ENCODE measurements at regions of chr2 and their contacts with region 1.

Region 1: GRCh38 chr2:63628403-63628942 is 39.7 kb downstream of the MDH1 start:
- DNase-seq: no peak
- H3K4me3 ChIP-seq: no peak overlapping the region
- H3K27ac ChIP-seq: no peak overlapping the region
- H3K4me1 ChIP-seq: no peaks in the 10 kb centered on the region
- H3K27me3 ChIP-seq: no peaks in the 10 kb centered on the region
- CTCF ChIP-seq: no peak

Region 2: DNA sequence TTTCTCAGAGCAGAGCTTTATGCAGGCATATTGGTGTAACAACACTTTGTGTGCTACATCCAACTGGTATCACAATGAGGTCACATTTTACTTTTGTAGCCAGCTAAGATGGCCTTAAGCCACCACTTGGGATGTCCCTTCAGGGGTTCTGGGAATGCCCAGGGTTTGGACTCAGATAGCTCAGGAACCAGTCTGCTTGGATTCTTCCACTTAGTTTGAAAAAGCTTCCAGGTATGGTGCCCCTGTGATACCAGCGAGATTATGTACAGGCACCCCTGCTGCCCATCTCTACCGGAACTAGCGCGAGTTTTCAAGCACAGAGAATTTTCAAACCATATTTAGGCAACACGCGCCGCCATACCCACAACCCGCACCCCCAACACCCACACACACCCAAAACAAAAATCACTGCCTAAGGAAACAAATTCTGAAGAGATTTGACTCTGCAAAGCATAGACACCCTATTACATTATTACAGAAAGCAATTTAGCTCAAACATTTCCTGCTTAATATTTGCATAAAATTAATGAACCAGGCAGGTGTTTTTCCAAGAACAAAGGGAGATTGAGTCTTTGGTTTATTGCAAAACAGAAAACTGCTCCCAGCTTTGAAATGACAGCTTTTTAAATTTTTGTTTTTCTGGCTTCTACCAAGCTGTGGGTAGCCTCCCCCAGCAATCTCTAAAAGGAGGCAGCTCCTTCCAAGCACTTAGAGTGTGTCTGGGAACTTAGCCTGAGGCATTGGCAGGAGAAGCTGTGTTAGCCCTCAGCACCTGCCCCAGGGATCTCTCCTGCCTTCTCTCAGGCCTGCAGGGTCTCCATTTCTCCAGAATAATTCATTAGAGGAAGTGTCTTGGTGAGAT is 1374.2 kb before region 1 on chr2:
- CTCF ChIA-PET with region 1: no interaction called
- POLR2A ChIA-PET with region 1: no interaction called
- intact Hi-C with region 1: no loop called
- DNase-seq: no peak
- H3K4me3 ChIP-seq: no peak overlapping the region
- H3K27ac ChIP-seq: no peak overlapping the region
- H3K4me1 ChIP-seq: no peaks in the 10 kb centered on the region
- H3K27me3 ChIP-seq: no peaks in the 10 kb centered on the region
- CTCF ChIP-seq: no peak

Region 3: GRCh38 chr2:62874881-62875383 is 753.5 kb before region 1 on chr2:
- CTCF ChIA-PET with region 1: no interaction called
- POLR2A ChIA-PET with region 1: no interaction called
- intact Hi-C with region 1: no loop called
- DNase-seq: no peak
- H3K4me3 ChIP-seq: no peak overlapping the region
- H3K27ac ChIP-seq: no peak overlapping the region
- H3K4me1 ChIP-seq: peaks cover 14% of the 10 kb centered on the region
- H3K27me3 ChIP-seq: no peaks in the 10 kb centered on the region
- CTCF ChIP-seq: no peak

Region 4: GRCh38 chr2:63871864-63872263 is 243.4 kb after region 1 on chr2:
- CTCF ChIA-PET with region 1: no interaction called
- POLR2A ChIA-PET with region 1: interaction called, 10 read pairs
- intact Hi-C with region 1: no loop called
- DNase-seq: no peak
- H3K4me3 ChIP-seq: no peak overlapping the region
- H3K27ac ChIP-seq: no peak overlapping the region
- H3K4me1 ChIP-seq: peaks cover 11% of the 10 kb centered on the region
- H3K27me3 ChIP-seq: no peaks in the 10 kb centered on the region
- CTCF ChIP-seq: no peak

Measured in PC-9 (cell line).